ENCODE measurements at regions of chr15 and their contacts with region 1.

Region 1: DNA sequence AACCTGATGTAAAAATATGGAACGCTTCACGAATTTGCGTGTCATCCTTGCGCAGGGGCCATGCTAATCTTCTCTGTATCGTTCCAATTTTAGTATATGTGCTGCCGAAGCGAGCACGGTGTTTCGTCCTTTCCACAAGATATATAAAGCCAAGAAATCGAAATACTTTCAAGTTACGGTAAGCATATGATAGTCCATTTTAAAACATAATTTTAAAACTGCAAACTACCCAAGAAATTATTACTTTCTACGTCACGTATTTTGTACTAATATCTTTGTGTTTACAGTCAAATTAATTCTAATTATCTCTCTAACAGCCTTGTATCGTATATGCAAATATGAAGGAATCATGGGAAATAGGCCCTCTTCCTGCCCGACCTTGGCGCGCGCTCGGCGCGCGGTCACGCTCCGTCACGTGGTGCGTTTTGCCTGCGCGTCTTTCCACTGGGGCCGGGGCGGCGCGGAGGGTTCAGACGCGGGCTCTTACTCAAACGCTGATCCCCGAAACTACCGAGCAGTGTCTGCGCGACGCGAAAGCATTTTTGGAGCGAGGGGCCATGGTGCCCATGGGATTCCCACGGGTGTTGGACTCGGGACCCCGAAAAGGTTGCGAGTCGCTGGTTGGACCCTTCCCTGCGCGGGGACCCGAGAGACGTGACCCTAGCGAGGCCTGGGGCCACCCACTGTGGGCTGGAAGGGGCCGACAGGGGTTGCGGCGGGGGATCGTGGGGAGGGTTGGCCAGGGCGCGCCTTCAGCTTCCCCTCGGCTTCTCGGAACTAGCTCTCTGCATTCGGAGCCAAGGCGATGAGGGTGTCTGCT is at the start of gene RNU6-1:
- DNase-seq: peak; percentile 89 to 96 (median 95)
- H3K4me3 ChIP-seq: peak within 1 kb of the TSS; percentile 64 to 100 (median 93)
- H3K27ac ChIP-seq: peak within 1 kb of the TSS; percentile 70 to 99 (median 96)
- H3K27me3 ChIP-seq: peaks cover 0 to 11% (median 7%) of the 10 kb centered on the region in 45 donors
- CTCF ChIP-seq: peak in 16 of 56 donors; percentile 5 to 38 (median 22)
- total RNA-seq, gene RNU6-1: not detected

Region 2: DNA sequence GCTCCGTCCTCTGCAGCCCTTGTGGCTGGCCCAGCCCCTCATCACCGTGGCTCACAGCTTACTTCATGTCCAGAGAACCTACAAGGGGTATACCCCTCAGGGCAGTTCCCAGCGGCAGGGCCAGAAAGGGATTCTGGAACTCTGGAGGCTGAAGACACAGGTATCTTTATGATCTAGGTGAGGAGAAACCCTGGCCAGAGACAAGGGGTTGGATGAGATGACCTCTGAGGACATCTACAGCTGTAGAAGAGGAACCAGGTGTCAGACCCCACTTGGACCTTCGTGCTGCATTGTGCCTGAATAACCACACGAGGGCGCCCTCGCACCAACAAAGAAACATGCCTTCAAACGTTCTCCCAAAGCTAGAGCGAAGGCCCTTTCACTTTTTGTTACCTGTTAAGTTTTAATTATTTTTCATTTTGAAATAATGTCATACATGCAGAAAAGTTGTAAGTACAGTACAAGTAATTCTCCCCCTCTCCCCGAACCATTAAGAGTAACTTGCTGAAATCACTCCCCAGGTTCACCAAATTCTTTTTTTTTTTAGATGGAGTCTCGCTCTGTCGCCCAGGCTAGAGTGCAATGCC is 893.5 kb before region 1 on chr15:
- intact Hi-C with region 1: loop called (anchors 2 to 5 kb)
- DNase-seq: peak in 8 of 10 donors; percentile 37 to 78 (median 63)
- H3K4me3 ChIP-seq: peak overlapping the region in 1 of 59 donors; percentile 7
- H3K27ac ChIP-seq: no peak overlapping the region
- H3K27me3 ChIP-seq: no peaks in the 10 kb centered on the region
- CTCF ChIP-seq: peak; percentile 71 to 99 (median 95)

Region 3: GRCh38 chr15:67456677-67457529 is 383.2 kb before region 1 on chr15:
- intact Hi-C with region 1: loop called (anchors 1 to 2 kb)
- DNase-seq: peak; percentile 50 to 84 (median 77)
- H3K4me3 ChIP-seq: no peak overlapping the region
- H3K27ac ChIP-seq: no peak overlapping the region
- H3K27me3 ChIP-seq: no peaks in the 10 kb centered on the region
- CTCF ChIP-seq: peak; percentile 59 to 92 (median 82)

Region 4: GRCh38 chr15:67521029-67521811 is 318.9 kb before region 1 on chr15 and contains the start of gene C15orf61:
- intact Hi-C with region 1: loop called (anchors 1 kb)
- DNase-seq: peak; percentile 62 to 91 (median 80)
- H3K4me3 ChIP-seq: peak within 1 kb of the TSS; percentile 71 to 98 (median 92)
- H3K27ac ChIP-seq: peak within 1 kb of the TSS; percentile 77 to 98 (median 95)
- H3K27me3 ChIP-seq: no peaks in the 10 kb centered on the region
- CTCF ChIP-seq: peak in 33 of 56 donors; percentile 1 to 60 (median 29)
- total RNA-seq, gene C15orf61: 10.8 to 35.1 (median 19.3) TPM

Region 5: DNA sequence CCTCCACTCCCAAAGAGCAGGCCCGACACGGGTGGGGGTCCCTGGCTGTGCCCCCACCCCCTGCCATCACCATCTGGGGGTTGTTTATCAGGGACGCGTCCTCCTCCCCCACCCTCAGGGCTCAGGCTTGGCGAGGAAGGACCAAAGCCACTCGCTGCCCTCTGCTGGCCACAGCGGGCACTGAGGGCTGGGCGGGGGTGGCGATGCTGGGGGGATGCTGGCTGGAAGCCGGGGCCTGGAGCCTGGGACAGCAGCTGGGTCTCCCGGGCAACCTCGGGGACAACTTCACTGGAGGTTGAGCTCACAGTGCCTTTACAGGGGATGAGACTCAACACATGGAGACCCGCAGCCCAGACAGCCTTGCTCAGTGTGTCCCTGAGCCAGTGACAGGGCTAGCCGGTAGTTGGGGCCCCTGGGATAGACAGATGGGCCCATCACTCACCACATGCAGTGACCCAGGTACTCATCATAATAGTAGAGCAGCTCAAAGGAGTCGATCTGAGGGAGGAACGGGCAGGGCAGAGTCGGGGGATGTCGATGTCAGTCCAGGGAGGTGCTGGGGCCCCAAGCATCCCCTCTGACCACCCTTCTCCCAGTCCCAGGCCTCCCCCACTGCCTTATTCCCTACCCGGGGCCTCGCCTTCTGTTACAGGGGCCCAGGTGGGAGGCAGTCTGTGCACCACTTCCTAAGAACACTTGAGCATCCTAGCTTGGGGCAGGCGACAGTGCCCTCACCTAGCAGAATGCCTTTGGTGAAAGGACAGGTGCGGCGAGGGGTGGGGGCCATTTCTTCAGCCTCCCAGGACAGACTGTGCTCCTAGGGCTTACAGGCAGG is 370.9 kb after region 1 on chr15:
- intact Hi-C with region 1: loop called in 1 of 2 experiments (anchors 5 kb)
- DNase-seq: peak; percentile 79 to 92 (median 81)
- H3K4me3 ChIP-seq: peak overlapping the region in 57 of 59 donors; percentile 10 to 68 (median 49)
- H3K27ac ChIP-seq: peak overlapping the region in 54 of 59 donors; percentile 36 to 93 (median 73)
- H3K27me3 ChIP-seq: no peaks in the 10 kb centered on the region
- CTCF ChIP-seq: peak; percentile 54 to 98 (median 92)

Measured in dorsolateral prefrontal cortex (tissue), 120 donors.